ENCODE measurements at regions of chr3 and their contacts with region 1.

Region 1: DNA sequence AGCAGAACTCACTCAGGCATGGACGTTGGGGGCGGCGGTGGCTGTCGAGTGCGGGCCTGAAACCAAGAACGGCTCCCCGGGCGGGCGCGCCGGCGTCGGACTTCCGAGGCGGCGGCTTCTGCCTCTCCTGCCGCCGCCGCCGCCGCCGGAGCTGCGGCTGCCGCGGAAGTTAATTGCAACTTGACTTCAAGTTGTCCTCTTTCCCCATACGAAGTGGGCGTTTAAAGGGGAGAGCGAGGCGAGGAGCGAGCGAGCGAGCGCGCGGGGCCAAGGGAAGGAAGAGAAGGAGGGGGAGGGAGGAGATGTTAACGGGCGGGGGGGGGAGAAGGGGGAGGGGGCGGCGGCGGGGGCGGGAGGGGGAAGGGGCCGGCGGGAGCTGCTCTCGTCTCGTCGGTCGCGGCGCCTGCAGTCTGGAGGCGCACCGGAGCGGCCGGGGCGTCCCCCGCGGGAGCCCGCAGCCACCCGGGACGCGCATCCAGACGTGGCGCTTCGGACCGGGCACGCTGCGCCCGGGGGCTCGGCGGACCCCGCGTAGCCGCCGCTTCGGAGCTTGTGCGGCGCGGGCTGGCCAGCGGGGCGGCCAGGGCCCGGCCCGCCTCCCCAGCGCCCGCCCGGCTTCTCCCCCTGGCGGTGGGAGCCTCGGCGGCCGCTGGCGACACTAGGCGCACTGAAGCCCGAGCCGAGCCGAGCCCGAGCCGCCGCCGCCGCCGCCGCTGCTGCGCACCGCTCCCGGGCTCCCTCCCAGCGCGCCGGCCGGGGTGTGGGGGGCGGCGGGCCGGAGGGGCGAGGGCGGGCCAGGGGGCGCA is 19.7 kb upstream of the SATB1 start:
- DNase-seq: peak; percentile 79 to 88 (median 82)
- H3K4me3 ChIP-seq: peak overlapping the region; percentile 82 to 91
- H3K4me3 Mint-ChIP-seq: peak overlapping the region; percentile 93 to 98 (median 95)
- H3K27ac ChIP-seq: peak overlapping the region; percentile 83
- H3K27ac Mint-ChIP-seq: peak overlapping the region; percentile 79 to 96 (median 92)
- H3K4me1 ChIP-seq: peaks cover 47% of the 10 kb centered on the region
- H3K4me1 Mint-ChIP-seq: peaks cover 24 to 65% (median 43%) of the 10 kb centered on the region in 4 donors
- H3K27me3 ChIP-seq: no peaks in the 10 kb centered on the region
- H3K27me3 Mint-ChIP-seq: no peaks in the 10 kb centered on the region

Region 2: GRCh38 chr3:18389108-18389733 is 55.6 kb before region 1 on chr3:
- CTCF ChIA-PET with region 1: no interaction called
- POLR2A ChIA-PET with region 1: interaction called, 6 read pairs
- intact Hi-C with region 1: loop called (anchors 1 kb)
- DNase-seq: peak in 4 of 5 donors; percentile 29 to 45 (median 36)
- H3K4me3 ChIP-seq: no peak overlapping the region
- H3K4me3 Mint-ChIP-seq: peak overlapping the region in 1 of 8 donors; percentile 43
- H3K27ac ChIP-seq: no peak overlapping the region
- H3K27ac Mint-ChIP-seq: peak overlapping the region in 2 of 7 donors; percentile 22 to 69
- H3K4me1 ChIP-seq: peaks cover 29% of the 10 kb centered on the region
- H3K4me1 Mint-ChIP-seq: peaks cover 15 to 53% (median 27%) of the 10 kb centered on the region in 4 donors
- H3K27me3 ChIP-seq: no peaks in the 10 kb centered on the region
- H3K27me3 Mint-ChIP-seq: no peaks in the 10 kb centered on the region

Region 3: DNA sequence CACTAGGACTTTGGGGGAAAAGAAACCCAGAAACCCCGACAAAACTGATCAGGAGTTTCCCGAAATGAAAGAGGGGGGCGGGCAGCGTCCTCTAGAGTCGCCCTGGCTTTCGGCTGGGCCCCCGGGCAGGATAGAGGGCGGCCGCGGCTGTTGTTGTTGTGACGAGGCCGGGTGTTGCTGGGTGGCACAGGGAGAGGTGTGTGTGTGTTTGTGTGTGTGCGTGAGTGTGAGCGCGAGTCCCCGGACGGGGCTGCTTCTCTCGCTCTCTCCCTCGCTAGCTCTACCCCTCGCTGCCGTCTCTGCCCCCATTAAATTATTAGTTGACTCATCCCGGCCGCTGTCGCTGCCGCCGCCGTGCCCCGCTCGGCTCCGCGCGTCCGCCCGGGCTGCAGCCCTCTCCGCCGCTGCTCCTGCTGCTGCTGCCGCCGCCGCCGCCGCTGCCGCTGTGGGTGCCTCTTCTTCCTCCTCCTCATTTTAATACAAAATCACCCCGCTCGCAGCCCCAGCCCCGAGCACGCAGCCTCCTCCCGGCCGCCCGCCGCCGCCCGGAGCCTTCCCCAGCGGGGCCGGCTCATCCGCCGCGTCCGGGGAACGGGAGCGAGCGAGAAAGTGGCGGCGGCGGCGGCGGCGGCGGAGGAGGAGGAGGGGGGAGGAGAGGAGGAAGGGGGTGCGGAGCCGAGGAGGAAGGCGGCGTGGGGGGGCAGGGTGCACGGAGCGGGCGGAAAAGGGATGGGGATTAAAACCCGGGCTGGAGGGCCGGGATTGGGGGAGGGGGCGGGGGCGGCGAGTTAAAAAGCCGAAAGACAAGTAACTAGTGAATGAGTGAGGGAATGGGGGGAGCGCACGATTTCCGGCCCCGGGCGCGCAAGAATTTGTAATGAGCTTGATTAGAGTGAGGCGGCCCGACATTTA is 19.8 kb before region 1 on chr3 and contains the start of gene SATB1:
- CTCF ChIA-PET with region 1: interaction called, 5 read pairs
- POLR2A ChIA-PET with region 1: interaction called, 88 read pairs
- intact Hi-C with region 1: loop called (anchors 1 kb)
- DNase-seq: peak; percentile 67 to 81 (median 68)
- H3K4me3 ChIP-seq: peak within 1 kb of the TSS; percentile 66 to 77
- H3K4me3 Mint-ChIP-seq: peak within 1 kb of the TSS; percentile 91 to 98 (median 97)
- H3K27ac ChIP-seq: peak within 1 kb of the TSS; percentile 79
- H3K27ac Mint-ChIP-seq: peak within 1 kb of the TSS; percentile 95 to 98 (median 97)
- H3K4me1 ChIP-seq: peaks cover 72% of the 10 kb centered on the region
- H3K4me1 Mint-ChIP-seq: peaks cover 48 to 88% (median 65%) of the 10 kb centered on the region in 4 donors
- H3K27me3 ChIP-seq: no peaks in the 10 kb centered on the region
- H3K27me3 Mint-ChIP-seq: peaks cover 0 to 1% of the 10 kb centered on the region in 2 donors
- total RNA-seq, gene SATB1: 211 TPM

Region 4: DNA sequence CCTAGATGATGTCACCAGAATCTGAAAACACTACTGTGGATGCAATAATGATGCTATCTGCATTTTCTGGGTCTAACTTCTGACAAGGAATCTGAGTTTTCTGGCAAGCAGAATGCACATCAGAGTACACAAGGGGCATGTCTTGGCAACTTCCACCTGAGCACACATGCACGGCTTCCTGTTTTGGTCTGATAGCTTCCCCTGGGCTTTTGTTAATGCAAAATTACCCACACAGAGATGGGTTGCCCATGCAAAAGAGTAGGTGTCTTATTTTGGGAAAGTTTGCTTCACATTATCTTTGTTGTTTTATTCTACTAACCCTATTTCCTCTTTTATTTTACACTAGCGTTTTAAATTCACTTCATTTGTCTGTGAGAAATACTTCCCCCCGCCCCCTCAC is 54.5 kb after region 1 on chr3:
- CTCF ChIA-PET with region 1: interaction called, 3 read pairs
- POLR2A ChIA-PET with region 1: interaction called, 3 read pairs
- intact Hi-C with region 1: loop called (anchors 2 kb)
- DNase-seq: peak; percentile 25 to 31 (median 27)
- H3K4me3 ChIP-seq: no peak overlapping the region
- H3K4me3 Mint-ChIP-seq: peak overlapping the region in 6 of 8 donors; percentile 33 to 78 (median 70)
- H3K27ac ChIP-seq: no peak overlapping the region
- H3K27ac Mint-ChIP-seq: peak overlapping the region in 6 of 7 donors; percentile 0 to 86 (median 72)
- H3K4me1 ChIP-seq: peaks cover 23% of the 10 kb centered on the region
- H3K4me1 Mint-ChIP-seq: peaks cover 11 to 27% (median 23%) of the 10 kb centered on the region in 4 donors
- H3K27me3 ChIP-seq: no peaks in the 10 kb centered on the region
- H3K27me3 Mint-ChIP-seq: no peaks in the 10 kb centered on the region

Region 5: GRCh38 chr3:18725668-18726407 is 281.0 kb after region 1 on chr3:
- CTCF ChIA-PET with region 1: interaction called, 3 read pairs
- POLR2A ChIA-PET with region 1: interaction called, 8 read pairs
- intact Hi-C with region 1: loop called (anchors 5 kb)
- DNase-seq: peak; percentile 56 to 74 (median 68)
- H3K4me3 ChIP-seq: peak overlapping the region in 1 of 2 donors; percentile 6
- H3K4me3 Mint-ChIP-seq: peak overlapping the region; percentile 56 to 80 (median 76)
- H3K27ac ChIP-seq: peak overlapping the region; percentile 53
- H3K27ac Mint-ChIP-seq: peak overlapping the region; percentile 92 to 99 (median 94)
- H3K4me1 ChIP-seq: peaks cover 74% of the 10 kb centered on the region
- H3K4me1 Mint-ChIP-seq: peaks cover 64 to 79% (median 72%) of the 10 kb centered on the region in 4 donors
- H3K27me3 ChIP-seq: no peaks in the 10 kb centered on the region
- H3K27me3 Mint-ChIP-seq: no peaks in the 10 kb centered on the region

Region 6: DNA sequence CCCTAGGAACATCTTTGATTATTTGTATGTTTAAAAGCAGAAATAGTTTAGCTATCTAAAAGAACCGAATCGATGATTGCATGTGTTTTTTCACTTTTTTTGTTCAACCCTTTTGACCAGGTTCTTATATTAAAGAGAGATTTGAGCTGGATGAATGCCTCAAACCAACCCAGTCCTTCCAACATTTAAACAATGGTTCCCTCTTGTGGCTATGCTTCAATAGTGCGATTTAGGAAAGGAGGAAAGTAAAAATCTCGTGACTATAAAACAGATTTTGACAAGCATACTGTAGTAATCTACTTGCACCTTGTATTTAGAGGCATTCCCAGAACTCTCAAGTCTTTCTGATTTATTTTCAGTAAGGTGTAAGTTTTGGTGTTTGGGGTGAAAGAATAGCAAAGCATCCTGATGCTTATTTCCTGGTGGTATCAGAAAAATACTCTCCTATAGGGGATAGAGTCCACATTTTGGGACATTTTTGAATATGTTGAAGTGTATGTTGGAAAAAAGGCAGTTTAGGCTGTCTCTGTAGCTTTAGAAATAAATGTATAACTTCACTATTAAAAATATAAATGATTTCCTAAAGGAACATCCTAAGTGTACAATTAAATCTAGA is 543.9 kb after region 1 on chr3:
- CTCF ChIA-PET with region 1: no interaction called
- POLR2A ChIA-PET with region 1: no interaction called
- intact Hi-C with region 1: loop called (anchors 5 kb)
- DNase-seq: peak in 4 of 5 donors; percentile 22 to 33 (median 32)
- H3K4me3 ChIP-seq: no peak overlapping the region
- H3K4me3 Mint-ChIP-seq: peak overlapping the region in 4 of 8 donors; percentile 2 to 52 (median 19)
- H3K27ac ChIP-seq: no peak overlapping the region
- H3K27ac Mint-ChIP-seq: no peak overlapping the region
- H3K4me1 ChIP-seq: no peaks in the 10 kb centered on the region
- H3K4me1 Mint-ChIP-seq: peaks cover 2 to 15% (median 12%) of the 10 kb centered on the region in 4 donors
- H3K27me3 ChIP-seq: peaks cover 6% of the 10 kb centered on the region
- H3K27me3 Mint-ChIP-seq: peaks cover 18 to 27% of the 10 kb centered on the region in 2 donors